Posterior vena cava (tissue), 2 donors: ENCODE measurements at regions of chr9 and their contacts with region 1.

Region 1: GRCh38 chr9:73611072-73611471 is 459.4 kb downstream of the ANXA1 start:
- DNase-seq: no peak

Region 2: DNA sequence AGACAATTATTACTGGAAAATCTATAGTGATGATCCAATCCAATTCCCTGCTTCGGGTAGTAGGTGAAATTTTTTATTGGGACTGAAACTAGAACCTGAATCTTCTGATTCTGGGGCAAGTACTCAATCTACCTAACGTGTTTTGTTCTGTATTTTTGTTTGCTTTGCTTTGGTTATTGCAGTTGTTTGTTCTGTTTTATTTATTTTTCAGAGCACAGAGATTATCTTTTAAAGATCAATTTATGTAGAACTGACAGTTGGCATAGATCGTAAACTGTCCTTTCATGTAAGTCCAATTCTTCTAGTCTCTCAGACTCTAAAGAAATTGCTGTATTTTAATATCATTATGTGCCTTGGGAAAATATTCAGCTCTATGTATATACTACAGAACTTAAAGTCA is 57.8 kb before region 1 on chr9:
- intact Hi-C with region 1: loop called in 1 of 2 experiments (anchors 2 kb)
- DNase-seq: no peak